Activated CD4-positive, alpha-beta T cell treated with anti-CD3 and anti-CD28 coated beads, Interleukin-2, amount 10 ng/mL, durations not matched to agents 24 days and 14 days (primary cell): ENCODE measurements at regions of chr6 and their contacts with region 1.

Region 1: GRCh38 chr6:29649701-29650673 is 6.9 kb upstream of the MOG start:
- DNase-seq: peak; percentile 99
- H3K4me3 Mint-ChIP-seq: peak overlapping the region; percentile 94
- H3K27ac Mint-ChIP-seq: peak overlapping the region; percentile 99
- H3K4me1 Mint-ChIP-seq: peaks cover 10% of the 10 kb centered on the region
- H3K27me3 Mint-ChIP-seq: peaks cover 5% of the 10 kb centered on the region

Region 2: GRCh38 chr6:29632789-29633533 is 17.0 kb before region 1 on chr6 and contains the start of gene GABBR1:
- intact Hi-C with region 1: loop called (anchors 1 kb)
- DNase-seq: peak; percentile 95
- H3K4me3 Mint-ChIP-seq: peak within 1 kb of the TSS; percentile 94
- H3K27ac Mint-ChIP-seq: peak within 1 kb of the TSS; percentile 68
- H3K4me1 Mint-ChIP-seq: peaks cover 45% of the 10 kb centered on the region
- H3K27me3 Mint-ChIP-seq: peaks cover 41% of the 10 kb centered on the region
- total RNA-seq, gene GABBR1: 20.4 and 24.0 TPM in 2 replicates

Region 3: DNA sequence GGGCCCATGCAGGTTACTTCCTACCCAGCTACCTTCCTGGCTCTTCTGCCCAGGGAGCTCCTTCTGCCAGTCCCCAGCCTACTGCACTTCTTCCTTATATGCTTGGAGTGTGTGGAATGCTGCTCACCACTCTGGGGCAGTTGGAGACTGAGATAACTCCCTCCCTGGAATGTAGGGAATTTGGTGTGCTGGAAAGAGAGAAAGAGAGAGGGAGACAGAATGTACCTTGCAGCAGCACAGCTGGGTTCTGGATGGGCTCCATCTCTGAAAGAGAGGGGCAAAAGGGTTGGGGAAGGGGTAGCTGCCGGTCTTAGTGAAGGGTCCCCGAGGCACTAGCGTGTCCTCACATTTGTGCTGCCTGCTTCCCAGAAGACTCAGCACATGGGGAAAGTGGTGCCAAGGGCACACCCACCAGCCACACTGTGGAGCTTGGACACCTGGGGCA is 1194.1 kb after region 1 on chr6:
- intact Hi-C with region 1: no loop called
- DNase-seq: no peak
- H3K4me3 Mint-ChIP-seq: no peak overlapping the region
- H3K27ac Mint-ChIP-seq: no peak overlapping the region
- H3K4me1 Mint-ChIP-seq: peaks cover 21% of the 10 kb centered on the region
- H3K27me3 Mint-ChIP-seq: no peaks in the 10 kb centered on the region